ENCODE measurements at regions of chrX and their contacts with region 1.

Region 1: GRCh38 chrX:30713061-30713525 is 59.9 kb downstream of the GK start:
- ATAC-seq: peak in 4 of 8 experiments; percentile 47 to 67 (median 64)
- H3K4me3 ChIP-seq: no peak overlapping the region
- H3K27ac ChIP-seq: no peak overlapping the region
- H3K4me1 ChIP-seq: no peaks in the 10 kb centered on the region

Region 2: DNA sequence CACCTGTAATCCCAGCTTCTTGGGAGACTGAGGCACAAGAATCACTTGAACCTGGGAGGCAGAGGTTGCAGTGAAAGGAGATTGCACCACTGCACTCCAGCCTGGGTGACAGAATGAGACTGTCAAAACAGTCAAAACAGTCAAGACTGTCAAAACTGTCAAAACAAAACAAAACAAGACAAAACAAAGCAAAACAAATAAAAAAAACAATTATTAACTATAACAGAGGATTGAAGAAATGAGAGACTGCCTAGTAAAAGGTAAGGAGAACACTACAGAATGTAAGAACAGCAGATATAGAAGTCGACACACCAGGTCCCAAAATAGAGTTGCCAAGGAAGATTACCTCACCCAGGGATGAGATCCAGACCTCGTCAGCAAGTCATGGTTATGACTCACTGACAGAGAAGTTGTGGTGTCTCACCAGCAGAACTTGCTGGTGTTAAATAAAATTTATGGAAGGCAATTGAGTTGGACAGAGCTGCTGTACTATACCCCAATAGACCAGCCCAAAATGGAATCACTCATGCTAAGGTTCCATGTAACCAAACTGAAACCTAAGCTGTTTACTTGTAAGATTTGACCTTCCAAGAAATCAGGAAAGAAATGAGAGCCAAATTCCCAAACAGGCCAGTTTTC is 92.0 kb before region 1 on chrX:
- in situ Hi-C with region 1: loop called in 1 of 9 experiments (anchors 25 kb)
- ATAC-seq: peak in 4 of 8 experiments; percentile 25 to 98 (median 72)
- H3K4me3 ChIP-seq: no peak overlapping the region
- H3K27ac ChIP-seq: no peak overlapping the region
- H3K4me1 ChIP-seq: no peaks in the 10 kb centered on the region